ENCODE measurements at regions of chr11 and their contacts with region 1.

Region 1: DNA sequence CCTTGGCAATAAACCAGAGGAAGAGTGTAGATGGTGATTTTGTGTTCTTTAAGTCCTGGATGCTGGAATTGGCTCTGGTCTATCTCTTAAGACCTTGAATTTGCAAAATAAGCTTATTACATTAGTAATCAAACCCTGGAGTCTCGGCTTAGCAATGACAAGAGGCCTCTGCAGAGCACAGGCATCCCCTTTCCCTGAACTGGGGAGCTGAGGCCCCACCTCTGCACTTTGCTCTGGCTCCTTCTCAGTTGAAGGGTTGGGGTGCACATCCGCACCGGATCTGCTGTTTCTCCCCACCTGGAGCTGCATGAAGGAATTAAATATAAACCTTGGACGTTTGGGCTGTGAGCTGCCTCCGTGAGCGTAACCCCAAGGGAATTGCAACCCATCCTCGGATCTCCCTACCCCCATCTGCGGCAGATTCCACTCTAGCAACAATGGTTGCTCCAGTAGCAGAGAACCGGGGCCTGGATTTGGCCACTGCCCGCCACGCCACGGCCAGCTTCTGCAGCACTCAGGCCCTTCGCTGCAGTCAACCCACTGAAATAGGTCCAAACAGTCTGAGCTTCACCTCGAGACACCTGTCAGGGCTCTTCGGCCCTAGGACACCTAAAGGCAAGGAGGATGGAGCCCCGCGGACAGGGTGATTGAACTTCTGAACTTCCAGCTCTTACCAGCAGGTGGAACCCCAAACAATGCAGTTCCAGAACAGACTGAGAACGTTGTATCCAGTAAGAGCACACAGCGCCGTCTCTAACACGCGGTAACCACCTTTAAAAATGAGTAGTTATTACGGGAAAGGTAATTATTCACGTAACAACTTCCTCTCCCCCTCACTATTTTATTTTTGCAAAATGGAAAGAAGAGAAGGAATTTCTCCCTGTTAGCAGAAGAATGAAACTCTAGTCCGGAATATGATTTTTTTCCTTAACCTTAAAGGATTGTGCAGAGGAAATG is 54.8 kb upstream of the CAPRIN1 start:
- DNase-seq: peak; percentile 80
- ATAC-seq: peak; percentile 99
- H3K4me3 Mint-ChIP-seq: peak overlapping the region; percentile 39
- H3K27ac Mint-ChIP-seq: no peak overlapping the region
- H3K4me1 Mint-ChIP-seq: peaks cover 11% of the 10 kb centered on the region
- H3K27me3 Mint-ChIP-seq: peaks cover 30% of the 10 kb centered on the region
- CTCF ChIP-seq: peak; percentile 36

Region 2: GRCh38 chr11:33920838-33921613 is 75.8 kb before region 1 on chr11:
- CTCF ChIA-PET with region 1: no interaction called
- POLR2A ChIA-PET with region 1: no interaction called
- DNase-seq: no peak
- ATAC-seq: no peak
- H3K4me3 Mint-ChIP-seq: no peak overlapping the region
- H3K27ac Mint-ChIP-seq: no peak overlapping the region
- H3K4me1 Mint-ChIP-seq: no peaks in the 10 kb centered on the region
- H3K27me3 Mint-ChIP-seq: no peaks in the 10 kb centered on the region; the same call in 1 of the 2 replicates
- CTCF ChIP-seq: no peak

Region 3: DNA sequence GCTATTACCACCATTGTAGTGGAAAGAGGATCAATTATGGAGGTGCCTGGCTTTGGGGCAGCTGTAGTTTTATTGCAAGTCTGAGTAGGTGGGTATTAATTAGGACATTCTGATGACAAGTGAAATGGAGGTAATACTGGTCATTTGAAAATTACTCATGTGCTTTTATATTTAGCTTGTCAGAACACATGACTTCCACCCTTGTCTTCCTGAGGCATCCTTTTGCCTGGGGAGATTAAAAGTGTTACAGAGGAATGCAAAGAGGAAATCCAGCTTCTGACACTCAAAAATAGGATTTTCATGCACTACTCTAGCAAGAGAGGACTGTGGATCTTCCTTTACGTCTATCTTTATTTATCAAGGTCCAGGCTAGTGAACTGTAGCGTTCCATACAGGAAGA is 10.1 kb after region 1 on chr11:
- CTCF ChIA-PET with region 1: interaction called, 18 read pairs
- POLR2A ChIA-PET with region 1: no interaction called
- DNase-seq: no peak
- ATAC-seq: no peak
- H3K4me3 Mint-ChIP-seq: no peak overlapping the region
- H3K27ac Mint-ChIP-seq: no peak overlapping the region
- H3K4me1 Mint-ChIP-seq: no peaks in the 10 kb centered on the region
- H3K27me3 Mint-ChIP-seq: no peaks in the 10 kb centered on the region; the same call in 1 of the 2 replicates
- CTCF ChIP-seq: no peak

Region 4: DNA sequence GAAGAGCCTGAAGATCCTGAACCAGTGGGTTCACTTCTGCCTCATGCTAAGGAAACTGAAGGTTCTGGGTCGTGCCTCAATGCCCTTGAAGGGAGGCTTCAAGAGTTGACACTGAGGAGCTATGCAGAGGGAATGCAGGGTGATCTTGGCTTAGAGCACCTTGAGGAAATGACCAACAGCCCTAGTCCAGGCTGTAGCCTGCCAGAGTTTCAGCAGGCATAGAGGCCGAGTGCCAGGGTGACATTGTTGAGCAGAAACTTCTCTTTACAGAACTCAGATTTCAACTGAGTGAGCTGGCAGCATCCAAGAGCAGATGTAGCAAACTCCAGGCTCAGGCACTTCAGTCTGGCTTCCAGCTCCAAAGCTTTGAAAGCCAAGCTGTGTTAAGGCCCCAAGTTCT is 31.6 kb after region 1 on chr11:
- CTCF ChIA-PET with region 1: interaction called, 13 read pairs
- POLR2A ChIA-PET with region 1: no interaction called
- DNase-seq: no peak
- ATAC-seq: no peak
- H3K4me3 Mint-ChIP-seq: no peak overlapping the region
- H3K27ac Mint-ChIP-seq: no peak overlapping the region
- H3K4me1 Mint-ChIP-seq: peaks cover 10% of the 10 kb centered on the region
- H3K27me3 Mint-ChIP-seq: no peaks in the 10 kb centered on the region
- CTCF ChIP-seq: no peak

Region 5: GRCh38 chr11:34111722-34112270 is 115.0 kb after region 1 on chr11:
- CTCF ChIA-PET with region 1: no interaction called
- POLR2A ChIA-PET with region 1: no interaction called
- DNase-seq: no peak
- ATAC-seq: no peak
- H3K4me3 Mint-ChIP-seq: no peak overlapping the region
- H3K27ac Mint-ChIP-seq: no peak overlapping the region
- H3K4me1 Mint-ChIP-seq: peaks cover 4% of the 10 kb centered on the region
- H3K27me3 Mint-ChIP-seq: no peaks in the 10 kb centered on the region
- CTCF ChIP-seq: no peak